HCT116 (cell line): ENCODE measurements at regions of chr6 and their contacts with region 1.

Region 1: DNA sequence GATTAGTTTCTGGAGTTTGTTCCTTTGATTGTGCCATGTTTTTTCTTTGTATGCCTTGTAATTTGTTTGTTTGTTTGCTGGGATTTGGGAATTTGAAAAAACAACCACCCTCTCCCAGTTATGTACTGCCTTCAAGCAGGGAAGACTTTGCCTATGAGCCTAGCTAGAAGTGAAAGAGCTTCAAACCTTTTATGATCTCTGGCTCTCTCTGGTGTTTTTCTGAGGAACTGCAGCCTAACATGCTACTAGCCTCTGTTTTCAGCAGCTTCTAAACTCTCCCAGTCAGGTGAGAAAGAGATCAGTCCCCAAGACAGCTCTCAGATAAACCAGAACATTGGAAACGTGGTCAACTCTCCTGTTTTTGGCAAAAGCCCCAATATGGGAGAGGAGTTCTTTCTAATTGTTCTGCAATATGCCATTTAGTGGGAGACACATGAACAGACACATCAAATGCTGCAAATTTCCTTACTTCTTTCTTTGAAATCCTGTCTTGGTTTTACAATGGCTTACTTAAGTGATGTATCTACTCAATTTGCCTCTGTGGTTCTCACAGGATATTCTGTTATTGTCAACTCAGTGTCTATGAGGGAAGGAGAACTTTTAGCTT is 58.9 kb upstream of the SERINC1 start:
- DNase-seq: peak; percentile 62
- ATAC-seq: peak; percentile 98
- H3K4me3 ChIP-seq: no peak overlapping the region
- H3K27ac ChIP-seq: no peak overlapping the region
- H3K4me1 ChIP-seq: no peaks in the 10 kb centered on the region
- H3K27me3 ChIP-seq: no peaks in the 10 kb centered on the region
- CTCF ChIP-seq: peak; percentile 71 to 90 (median 90)
- POLR2A ChIP-seq: no peak
- RAD21 ChIP-seq: peak; percentile 84

Region 2: GRCh38 chr6:122381497-122382265 is 148.9 kb before region 1 on chr6:
- CTCF ChIA-PET with region 1: interaction called, 32 read pairs
- POLR2A ChIA-PET with region 1: no interaction called
- RAD21 ChIA-PET with region 1: no interaction called
- intact Hi-C with region 1: loop called (anchors 1 kb)
- DNase-seq: peak; percentile 68
- ATAC-seq: peak; percentile 94
- H3K4me3 ChIP-seq: no peak overlapping the region
- H3K27ac ChIP-seq: no peak overlapping the region
- H3K4me1 ChIP-seq: no peaks in the 10 kb centered on the region
- H3K27me3 ChIP-seq: no peaks in the 10 kb centered on the region
- CTCF ChIP-seq: peak; percentile 57 to 67 (median 65); a peak in 5 of 6 replicates
- POLR2A ChIP-seq: no peak
- RAD21 ChIP-seq: peak; percentile 70